Ovary (tissue), 10 donors: ENCODE measurements at regions of chr20 and their contacts with region 1.

Region 1: DNA sequence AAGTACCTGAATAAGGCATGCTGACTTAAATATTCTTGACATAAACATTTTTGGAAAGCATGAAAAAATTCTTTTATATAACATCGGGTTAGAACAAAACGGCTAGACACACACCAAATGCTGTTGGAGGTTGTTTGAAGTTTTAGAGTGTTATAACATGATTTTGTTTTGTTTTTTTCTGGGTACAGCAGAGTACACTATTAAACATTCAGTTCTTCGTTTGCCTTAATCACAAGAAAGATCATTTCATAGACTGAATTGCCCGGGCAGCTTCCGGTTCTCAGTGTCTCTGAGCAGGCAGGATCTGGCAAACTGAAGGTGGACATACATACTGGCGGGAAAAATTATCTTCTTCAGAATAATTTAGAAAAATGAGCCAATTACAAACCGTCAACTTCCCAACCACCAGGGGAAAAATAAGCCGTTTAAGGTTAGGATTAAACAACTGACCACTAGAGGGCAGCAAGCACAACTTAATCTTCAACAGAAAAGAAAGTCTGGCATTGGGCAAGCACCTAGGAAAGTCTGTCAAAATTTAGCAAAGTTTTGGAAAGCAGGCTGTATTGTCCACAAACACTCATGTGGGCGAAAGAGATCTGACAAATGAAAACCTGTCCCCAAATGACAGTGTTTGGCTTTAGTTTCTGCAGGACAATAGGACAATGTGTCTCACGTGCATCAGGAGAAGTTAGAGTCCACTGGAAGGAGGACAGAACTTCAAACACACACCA is 15.0 kb downstream of the ZNF217 start:
- DNase-seq: peak in 4 of 5 donors; percentile 43 to 75 (median 52)
- H3K4me3 ChIP-seq: no peak overlapping the region
- H3K27ac ChIP-seq: peak overlapping the region in 1 of 2 donors; percentile 50
- H3K4me1 ChIP-seq: peaks cover 7% of the 10 kb centered on the region
- H3K27me3 ChIP-seq: no peaks in the 10 kb centered on the region
- CTCF ChIP-seq: peak; percentile 84 to 99 (median 97)
- EP300 ChIP-seq: no peak
- POLR2A ChIP-seq: peak; percentile 11

Region 2: DNA sequence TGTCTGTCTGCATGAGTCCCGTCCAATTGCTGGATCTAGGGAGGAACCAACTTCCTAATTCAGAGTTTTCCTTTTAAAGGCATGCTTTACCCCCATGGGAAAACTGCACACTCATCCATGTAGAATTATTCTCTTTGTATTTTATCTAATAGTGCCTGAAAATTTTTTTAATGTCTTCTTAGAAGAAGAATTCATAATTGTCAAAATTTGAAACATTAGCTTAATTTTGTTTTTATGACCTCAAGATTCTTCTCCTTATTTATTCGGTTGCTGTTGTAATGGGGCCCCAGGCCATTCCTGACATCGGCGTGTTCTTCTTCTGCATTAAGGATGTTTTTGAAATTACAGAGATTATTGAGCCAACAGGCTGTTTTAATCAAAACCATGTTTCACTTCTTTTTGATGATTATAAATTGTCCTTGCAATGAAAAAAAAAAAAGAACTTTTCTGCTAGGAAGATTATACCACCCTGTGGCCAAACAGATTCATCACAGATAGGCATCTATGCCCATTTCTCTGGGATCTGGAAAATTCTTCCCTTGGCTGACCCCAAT is 85.3 kb before region 1 on chr20:
- intact Hi-C with region 1: no loop called
- DNase-seq: no peak
- H3K4me3 ChIP-seq: no peak overlapping the region
- H3K27ac ChIP-seq: no peak overlapping the region
- H3K4me1 ChIP-seq: peaks cover 1% of the 10 kb centered on the region
- H3K27me3 ChIP-seq: no peaks in the 10 kb centered on the region
- CTCF ChIP-seq: peak in 1 of 3 donors; percentile 23
- EP300 ChIP-seq: no peak
- POLR2A ChIP-seq: no peak

Region 3: DNA sequence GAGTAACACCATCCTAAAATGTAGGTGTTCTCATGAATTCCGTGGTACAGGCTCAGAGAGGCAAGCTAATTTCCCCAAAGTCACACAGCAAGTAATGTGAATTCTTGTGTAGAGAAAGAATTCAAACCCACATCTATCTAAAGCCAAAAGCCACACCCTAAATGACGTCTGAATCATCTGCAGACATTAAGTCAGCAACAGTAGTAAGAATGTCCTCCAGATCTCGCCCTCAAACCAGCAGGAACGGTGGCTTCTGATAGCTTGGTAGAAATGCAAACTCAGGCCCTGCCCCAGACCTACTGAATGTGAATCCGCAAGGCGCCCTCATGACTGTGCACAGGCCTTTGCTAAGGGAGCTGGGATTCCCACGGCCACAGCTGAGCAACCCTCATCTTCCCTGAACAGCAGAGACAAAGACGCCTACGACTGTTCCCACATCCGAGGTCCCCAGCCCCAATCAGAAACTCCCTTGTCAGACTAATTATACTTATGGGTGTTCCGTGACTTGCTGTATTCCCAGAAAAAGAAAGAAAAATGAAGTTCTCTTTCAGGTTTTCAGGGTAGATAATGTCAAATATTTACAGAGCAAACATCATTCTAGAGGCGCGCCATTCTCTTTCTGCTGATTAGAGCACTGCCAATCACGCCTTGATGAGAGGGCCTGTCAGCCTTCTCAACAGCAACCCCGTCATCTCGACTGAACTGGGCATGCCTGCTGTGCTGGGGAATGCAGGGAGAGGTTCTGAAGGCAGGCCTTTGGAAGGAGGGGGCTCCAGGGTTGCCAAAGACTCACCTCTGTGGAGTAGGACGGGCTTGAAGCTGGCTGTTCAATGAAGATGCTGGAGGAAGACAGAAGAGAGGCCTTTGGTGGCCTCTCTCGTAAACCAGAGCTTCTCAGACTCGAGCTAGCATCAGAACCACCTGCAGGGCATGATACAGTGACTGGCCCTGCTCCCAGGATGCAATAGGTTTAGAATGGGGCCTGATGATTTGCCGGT is 65.1 kb before region 1 on chr20:
- intact Hi-C with region 1: no loop called
- DNase-seq: no peak
- H3K4me3 ChIP-seq: no peak overlapping the region
- H3K27ac ChIP-seq: no peak overlapping the region
- H3K4me1 ChIP-seq: no peaks in the 10 kb centered on the region
- H3K27me3 ChIP-seq: no peaks in the 10 kb centered on the region
- CTCF ChIP-seq: no peak
- EP300 ChIP-seq: no peak
- POLR2A ChIP-seq: no peak

Region 4: DNA sequence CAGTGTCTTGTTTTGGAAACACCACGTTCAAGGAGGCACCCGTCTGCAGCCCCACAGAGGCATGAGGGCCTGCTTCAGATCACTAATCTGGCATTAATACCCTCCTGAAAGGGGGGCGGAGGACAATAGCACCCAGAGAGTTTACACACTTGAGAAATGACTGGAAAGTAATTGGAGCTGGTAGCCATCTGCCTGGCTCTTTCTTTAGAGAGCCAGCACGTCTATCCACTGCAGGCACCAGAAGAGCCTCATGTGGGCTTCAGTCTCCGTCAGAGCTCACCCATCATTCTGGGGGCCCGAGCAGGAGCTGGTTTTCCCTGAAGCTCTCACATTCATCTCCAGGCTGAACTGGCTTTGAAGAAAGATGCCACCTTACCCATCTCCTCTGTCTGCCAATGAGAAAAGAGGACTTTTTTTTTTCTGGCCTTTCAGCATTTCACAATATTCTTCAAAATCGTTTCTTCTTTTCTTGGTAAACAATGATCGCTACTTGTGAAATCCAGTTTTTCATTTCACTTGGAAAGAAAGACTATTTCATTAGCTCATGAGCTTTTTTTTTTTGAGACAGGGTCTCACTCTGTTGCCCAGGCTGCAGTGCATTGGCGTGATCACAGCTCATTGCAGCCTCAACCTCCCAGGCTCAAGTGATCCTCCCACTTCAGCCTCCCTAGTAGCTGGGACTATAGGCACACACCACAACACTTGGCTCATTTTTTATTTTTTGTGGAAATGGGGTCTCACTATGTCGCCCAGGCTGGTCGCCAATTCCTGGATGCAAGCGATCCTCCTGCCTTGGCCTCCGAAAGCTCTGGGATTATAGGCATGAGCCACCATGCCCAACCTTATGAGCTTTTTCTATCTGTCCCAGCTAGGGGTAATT is 139.7 kb after region 1 on chr20:
- intact Hi-C with region 1: no loop called
- DNase-seq: no peak
- H3K4me3 ChIP-seq: no peak overlapping the region
- H3K27ac ChIP-seq: no peak overlapping the region
- H3K4me1 ChIP-seq: no peaks in the 10 kb centered on the region
- H3K27me3 ChIP-seq: no peaks in the 10 kb centered on the region
- CTCF ChIP-seq: no peak
- EP300 ChIP-seq: no peak
- POLR2A ChIP-seq: no peak

Region 5: DNA sequence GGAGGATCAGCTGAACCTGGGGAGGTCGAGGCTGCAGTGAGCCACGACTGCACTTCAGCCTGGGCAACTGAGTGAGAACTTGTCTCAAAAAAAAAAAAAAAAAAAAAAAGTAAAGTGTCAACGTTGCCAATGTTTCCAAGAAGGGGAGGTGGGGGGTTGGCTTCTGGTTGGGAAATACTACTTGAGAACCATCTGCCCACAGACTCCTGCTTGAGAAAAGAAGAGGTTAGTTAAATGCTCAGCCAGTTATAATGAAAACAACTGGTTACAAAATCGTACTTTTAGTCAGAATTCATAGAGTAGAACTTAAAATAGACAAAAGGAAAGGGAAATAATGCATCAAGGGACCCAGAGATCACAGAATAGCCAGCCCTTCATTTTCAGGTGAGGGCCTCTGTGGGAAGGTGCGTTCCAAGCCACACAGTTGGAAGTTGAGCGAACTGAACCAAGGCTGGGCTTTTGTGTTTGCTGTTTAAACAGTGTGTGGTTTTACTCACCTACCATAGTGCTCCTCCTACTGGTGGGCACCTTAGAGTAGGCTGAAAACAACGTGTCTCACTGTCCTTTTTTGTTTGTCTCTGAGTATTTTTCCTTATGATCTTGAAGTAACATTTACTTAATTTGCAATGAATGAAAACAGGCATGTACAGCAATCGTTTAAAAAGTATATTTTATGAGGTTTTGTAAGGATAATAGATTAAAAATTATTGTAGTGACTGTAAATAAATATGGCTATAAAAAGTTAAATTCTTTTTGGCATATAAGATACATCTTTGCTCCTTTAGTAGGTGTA is 291.0 kb after region 1 on chr20:
- intact Hi-C with region 1: loop called in 1 of 4 experiments (anchors 5 kb)
- DNase-seq: peak in 4 of 5 donors; percentile 40 to 70 (median 49)
- H3K4me3 ChIP-seq: no peak overlapping the region
- H3K27ac ChIP-seq: peak overlapping the region in 1 of 2 donors; percentile 28
- H3K4me1 ChIP-seq: peaks cover 7% of the 10 kb centered on the region
- H3K27me3 ChIP-seq: no peaks in the 10 kb centered on the region
- CTCF ChIP-seq: peak; percentile 26 to 72 (median 69)
- EP300 ChIP-seq: no peak
- POLR2A ChIP-seq: no peak

Region 6: GRCh38 chr20:53915446-53916172 is 337.0 kb after region 1 on chr20:
- intact Hi-C with region 1: loop called in 3 of 4 experiments (anchors 2 to 10 kb)
- DNase-seq: peak; percentile 92 to 97 (median 95)
- H3K4me3 ChIP-seq: peak overlapping the region; percentile 72
- H3K27ac ChIP-seq: peak overlapping the region; percentile 74
- H3K4me1 ChIP-seq: peaks cover 11% of the 10 kb centered on the region
- H3K27me3 ChIP-seq: no peaks in the 10 kb centered on the region
- CTCF ChIP-seq: peak; percentile 71 to 76 (median 75)
- EP300 ChIP-seq: no peak
- POLR2A ChIP-seq: no peak

Region 7: DNA sequence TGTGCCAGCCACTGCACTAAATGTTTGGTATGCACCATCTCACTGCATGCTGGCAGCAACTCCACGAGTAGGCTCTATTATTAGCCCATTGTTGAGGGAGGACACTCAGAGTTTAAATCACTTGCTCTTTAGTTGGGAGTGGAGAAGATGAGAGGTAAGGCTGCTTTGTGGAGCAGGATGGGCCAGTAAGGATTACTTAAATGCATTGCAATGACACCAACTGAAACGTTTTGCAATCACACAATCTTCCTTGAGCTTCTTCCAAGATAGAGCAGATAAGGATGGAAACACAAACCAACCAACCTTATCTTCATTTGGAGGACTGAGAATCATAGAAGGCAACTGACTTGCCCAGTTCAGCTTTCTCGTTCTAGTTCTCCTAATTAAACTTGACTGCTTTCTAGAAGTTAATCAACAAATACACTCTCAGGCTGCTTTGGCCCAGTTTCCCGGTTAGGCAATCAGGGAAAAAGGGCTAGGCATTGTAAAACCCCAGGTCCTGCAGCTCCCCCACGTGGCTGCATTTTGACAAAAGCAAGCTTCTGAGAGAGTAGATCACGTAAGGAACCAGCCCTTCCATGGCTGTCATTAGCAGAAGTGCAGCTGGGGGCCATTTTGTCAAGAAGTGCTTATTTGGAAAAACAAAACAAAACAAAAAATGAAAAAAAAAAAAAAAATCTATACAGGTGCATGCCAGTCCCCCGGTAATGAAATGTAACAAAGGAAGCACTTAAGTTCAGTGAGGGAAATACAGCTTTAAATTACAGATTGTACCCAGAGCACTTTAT is 361.1 kb after region 1 on chr20:
- intact Hi-C with region 1: loop called in 3 of 4 experiments (anchors 5 to 10 kb)
- DNase-seq: peak; percentile 81 to 95 (median 91)
- H3K4me3 ChIP-seq: no peak overlapping the region
- H3K27ac ChIP-seq: no peak overlapping the region
- H3K4me1 ChIP-seq: peaks cover 15% of the 10 kb centered on the region
- H3K27me3 ChIP-seq: no peaks in the 10 kb centered on the region
- CTCF ChIP-seq: peak; percentile 25 to 79 (median 61)
- EP300 ChIP-seq: no peak
- POLR2A ChIP-seq: no peak